Ascending aorta (tissue), 2 donors: ENCODE measurements at regions of chr18 and their contacts with region 1.

Region 1: DNA sequence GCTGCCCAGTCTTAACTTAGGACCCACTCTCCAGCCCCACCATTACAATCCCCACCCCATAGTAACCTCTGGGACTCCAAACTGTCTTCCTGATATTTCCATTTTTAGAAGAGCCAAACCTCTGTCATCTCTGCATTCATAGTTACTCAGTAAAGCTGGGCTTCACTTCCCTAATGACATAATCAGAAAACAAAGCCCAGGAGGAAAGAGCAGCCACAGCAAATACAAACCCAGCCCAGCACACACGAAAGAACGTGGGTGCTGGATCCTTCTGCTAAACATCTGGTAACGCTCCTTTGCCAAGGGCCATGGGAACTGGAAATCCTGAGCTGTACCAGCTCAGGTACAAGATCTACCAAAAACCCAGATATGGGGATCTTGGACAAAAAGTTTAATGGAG is 36.8 kb upstream of the RIOK3 start:
- DNase-seq: no peak
- H3K4me3 ChIP-seq: no peak overlapping the region
- H3K27ac ChIP-seq: no peak overlapping the region
- H3K4me1 ChIP-seq: no peaks in the 10 kb centered on the region
- H3K27me3 ChIP-seq: no peaks in the 10 kb centered on the region
- CTCF ChIP-seq: no peak

Region 2: DNA sequence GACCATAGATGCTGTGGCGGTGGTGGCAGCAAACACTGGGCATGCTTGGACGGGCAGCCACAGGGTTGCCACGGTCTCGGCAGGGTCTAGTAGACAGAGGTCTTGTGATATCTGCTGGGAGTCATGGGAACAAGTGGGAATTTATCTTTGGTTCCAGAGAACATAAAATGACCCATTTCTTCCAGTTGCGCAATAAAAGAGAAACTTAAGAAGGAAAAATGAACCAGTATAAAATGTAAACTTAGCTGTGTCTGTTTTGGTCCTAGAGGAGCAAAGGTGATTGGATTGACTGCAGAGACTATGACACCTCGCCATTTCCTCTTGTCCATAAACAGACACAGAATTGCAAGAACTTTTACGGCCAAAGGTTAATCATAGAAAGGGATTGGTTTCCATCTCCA is 615.7 kb before region 1 on chr18:
- intact Hi-C with region 1: loop called (anchors 10 kb)
- DNase-seq: no peak
- H3K4me3 ChIP-seq: no peak overlapping the region
- H3K27ac ChIP-seq: peak overlapping the region; percentile 29 to 44
- H3K4me1 ChIP-seq: peaks cover 0 to 13% of the 10 kb centered on the region in 2 donors
- H3K27me3 ChIP-seq: no peaks in the 10 kb centered on the region
- CTCF ChIP-seq: no peak

Region 3: GRCh38 chr18:23131693-23132319 is 284.5 kb before region 1 on chr18:
- intact Hi-C with region 1: loop called (anchors 1 kb)
- DNase-seq: peak in 1 of 2 donors; percentile 85
- H3K4me3 ChIP-seq: no peak overlapping the region
- H3K27ac ChIP-seq: no peak overlapping the region
- H3K4me1 ChIP-seq: peaks cover 0 to 3% of the 10 kb centered on the region in 2 donors
- H3K27me3 ChIP-seq: no peaks in the 10 kb centered on the region
- CTCF ChIP-seq: peak; percentile 74 to 82 (median 75)